Psoas muscle (tissue), 8 donors: ENCODE measurements at regions of chr4 and their contacts with region 1.

Region 1: DNA sequence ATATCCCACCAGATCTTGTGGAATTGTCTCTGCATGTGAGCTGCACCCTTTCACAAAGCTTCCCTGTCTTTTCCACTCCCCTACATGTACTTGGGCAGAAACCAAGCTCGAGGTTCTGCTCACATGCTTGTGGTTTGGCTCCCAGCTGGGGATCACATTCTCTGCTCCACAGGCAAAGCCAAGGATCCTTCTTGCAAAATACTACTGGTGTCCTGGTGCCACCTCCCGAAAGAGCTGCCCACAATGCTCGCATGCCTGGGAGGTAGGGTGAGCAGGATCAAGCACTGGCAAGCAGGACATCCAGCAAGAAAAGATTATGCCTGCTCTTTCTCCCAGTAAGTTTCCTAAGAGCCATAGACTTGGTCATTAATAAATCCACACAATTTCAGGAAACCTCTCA is 45.1 kb upstream of the PPARGC1A start:
- DNase-seq: peak; percentile 72 to 88
- ATAC-seq: peak; percentile 80 to 84 (median 83)
- H3K4me3 ChIP-seq: no peak overlapping the region
- H3K27ac ChIP-seq: peak overlapping the region; percentile 62
- H3K4me1 ChIP-seq: peaks cover 38% of the 10 kb centered on the region
- H3K27me3 ChIP-seq: no peaks in the 10 kb centered on the region
- CTCF ChIP-seq: no peak

Region 2: GRCh38 chr4:23602720-23603119 is 332.2 kb before region 1 on chr4:
- intact Hi-C with region 1: no loop called
- DNase-seq: no peak
- ATAC-seq: no peak
- H3K4me3 ChIP-seq: no peak overlapping the region
- H3K27ac ChIP-seq: no peak overlapping the region
- H3K4me1 ChIP-seq: no peaks in the 10 kb centered on the region
- H3K27me3 ChIP-seq: no peaks in the 10 kb centered on the region
- CTCF ChIP-seq: no peak

Region 3: GRCh38 chr4:23889814-23890341 is 45.0 kb before region 1 on chr4 and contains the start of gene PPARGC1A:
- intact Hi-C with region 1: loop called (anchors 5 kb)
- DNase-seq: peak; percentile 51 to 79
- ATAC-seq: peak; percentile 89 to 95 (median 92)
- H3K4me3 ChIP-seq: peak within 1 kb of the TSS; percentile 76
- H3K27ac ChIP-seq: peak within 1 kb of the TSS; percentile 95
- H3K4me1 ChIP-seq: no peaks in the 10 kb centered on the region
- H3K27me3 ChIP-seq: no peaks in the 10 kb centered on the region
- CTCF ChIP-seq: no peak
- total RNA-seq, gene PPARGC1A: 7.8 to 89.3 (median 53.0) TPM